Activated naive CD4-positive, alpha-beta T cell treated with anti-CD3 and anti-CD28 coated beads for 36 hours (primary cell): ENCODE measurements at regions of chr16 and their contacts with region 1.

Region 1: GRCh38 chr16:67546761-67547422 is 15.4 kb upstream of the CTCF start:
- DNase-seq: peak; percentile 81
- H3K4me3 Mint-ChIP-seq: peak overlapping the region; percentile 14
- H3K27ac Mint-ChIP-seq: peak overlapping the region; percentile 91
- H3K4me1 Mint-ChIP-seq: peaks cover 34% of the 10 kb centered on the region
- H3K27me3 Mint-ChIP-seq: no peaks in the 10 kb centered on the region

Region 2: GRCh38 chr16:66608241-66609138 is 938.4 kb before region 1 on chr16:
- CTCF ChIA-PET with region 1: no interaction called
- intact Hi-C with region 1: no loop called
- DNase-seq: peak; percentile 89
- H3K4me3 Mint-ChIP-seq: no peak overlapping the region
- H3K27ac Mint-ChIP-seq: no peak overlapping the region
- H3K4me1 Mint-ChIP-seq: peaks cover 33% of the 10 kb centered on the region
- H3K27me3 Mint-ChIP-seq: no peaks in the 10 kb centered on the region

Region 3: DNA sequence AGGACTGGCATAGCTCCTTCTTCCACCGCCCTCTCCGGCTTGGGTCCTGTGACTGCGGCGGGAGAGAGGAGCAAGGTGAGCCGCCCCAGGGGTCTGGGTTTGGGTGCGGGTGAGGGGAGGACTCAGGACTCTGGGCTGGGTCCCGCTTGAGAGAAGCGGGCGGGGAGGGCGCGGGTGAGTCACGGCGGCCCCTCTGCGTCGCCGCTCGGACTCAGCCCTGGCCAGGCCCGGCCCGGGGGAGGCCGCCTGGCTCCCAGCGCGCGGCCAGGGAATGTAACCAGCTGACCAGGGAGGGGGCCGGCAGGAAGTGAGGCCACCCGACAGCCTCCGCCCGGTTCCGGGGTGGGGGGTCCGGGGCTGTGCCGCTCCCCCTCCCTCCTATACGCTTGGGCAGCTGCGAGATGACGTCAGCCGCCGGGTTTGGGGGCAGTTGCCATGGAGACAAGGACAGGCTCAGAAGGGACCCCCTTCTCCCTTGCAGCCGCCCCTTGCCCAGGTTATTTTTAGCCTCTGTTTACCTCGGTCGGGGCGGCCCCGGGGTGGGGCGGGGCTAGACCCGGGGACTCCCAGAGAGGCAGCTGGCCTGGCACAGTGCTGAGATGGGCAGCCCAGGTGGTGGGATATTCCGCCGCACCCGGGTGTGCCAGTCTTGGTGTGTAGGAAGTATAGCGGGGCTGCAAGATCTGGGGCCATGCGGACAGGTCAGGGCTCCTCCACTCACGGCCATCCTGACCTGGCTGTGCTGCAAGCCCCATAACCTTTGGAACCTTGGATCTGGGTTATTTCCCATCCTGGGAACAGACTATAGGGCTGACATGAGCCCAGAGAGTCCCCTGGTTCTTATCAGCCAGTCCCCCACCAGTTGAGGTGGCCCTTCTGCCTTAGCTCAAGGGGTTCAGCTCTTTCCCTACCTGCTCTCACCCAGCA is 16.6 kb before region 1 on chr16:
- CTCF ChIA-PET with region 1: interaction called, 29 read pairs
- intact Hi-C with region 1: no loop called
- DNase-seq: peak; percentile 54
- H3K4me3 Mint-ChIP-seq: peak overlapping the region; percentile 68
- H3K27ac Mint-ChIP-seq: no peak overlapping the region
- H3K4me1 Mint-ChIP-seq: peaks cover 14% of the 10 kb centered on the region
- H3K27me3 Mint-ChIP-seq: peaks cover 20% of the 10 kb centered on the region

Region 4: DNA sequence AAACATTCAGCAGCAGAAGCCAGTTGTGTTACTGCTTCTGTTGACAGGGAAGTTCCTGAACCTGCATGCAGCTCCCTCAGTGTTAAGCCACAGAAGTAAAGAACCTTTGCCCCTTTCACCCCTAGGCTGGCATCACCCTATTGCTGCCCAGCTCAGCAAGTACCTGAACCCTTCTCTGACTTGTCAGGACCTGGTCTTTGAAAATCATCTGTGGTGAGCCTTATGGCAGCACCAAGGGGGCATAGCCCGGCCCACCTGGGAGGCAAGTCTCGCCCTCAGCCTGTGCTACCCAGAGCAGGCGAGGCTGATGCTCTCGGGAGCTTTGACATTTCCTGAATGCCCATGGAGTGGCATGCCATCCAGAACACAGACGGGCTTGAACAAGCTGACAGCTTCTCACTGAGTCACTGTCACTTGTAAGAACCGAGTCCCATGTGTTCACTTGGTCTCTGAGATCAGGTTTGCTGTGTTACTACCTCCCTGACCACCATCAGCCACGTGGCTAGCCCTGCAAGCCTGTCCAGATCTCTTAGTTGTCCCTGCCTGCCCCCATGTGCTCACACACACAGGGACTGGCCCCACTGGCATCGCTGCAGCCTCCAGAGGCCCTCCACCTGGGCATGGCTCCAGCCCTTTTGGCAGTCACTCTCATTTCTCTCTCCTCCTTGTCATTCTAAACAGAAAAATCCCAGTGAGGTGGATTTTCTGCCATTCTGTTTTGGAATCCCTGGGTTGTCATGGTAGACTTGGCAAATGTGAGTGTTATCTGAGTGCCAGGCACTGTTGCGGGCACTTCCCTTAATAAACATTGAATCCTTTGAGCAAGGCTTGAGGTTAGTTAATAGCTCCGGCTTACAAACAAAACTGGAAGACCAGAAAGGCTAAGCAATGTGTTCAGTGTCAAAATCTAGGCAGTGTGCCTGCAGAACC is 95.2 kb after region 1 on chr16:
- CTCF ChIA-PET with region 1: interaction called, 168 read pairs
- intact Hi-C with region 1: loop called (anchors 1 kb)
- DNase-seq: no peak
- H3K4me3 Mint-ChIP-seq: no peak overlapping the region
- H3K27ac Mint-ChIP-seq: no peak overlapping the region
- H3K4me1 Mint-ChIP-seq: peaks cover 9% of the 10 kb centered on the region
- H3K27me3 Mint-ChIP-seq: no peaks in the 10 kb centered on the region

Region 5: GRCh38 chr16:67660564-67661028 is 113.7 kb after region 1 on chr16 and contains the start of gene PARD6A:
- CTCF ChIA-PET with region 1: interaction called, 34 read pairs
- intact Hi-C with region 1: no loop called
- DNase-seq: peak; percentile 97
- H3K4me3 Mint-ChIP-seq: peak within 1 kb of the TSS; percentile 90
- H3K27ac Mint-ChIP-seq: peak within 1 kb of the TSS; percentile 92
- H3K4me1 Mint-ChIP-seq: peaks cover 21% of the 10 kb centered on the region
- H3K27me3 Mint-ChIP-seq: no peaks in the 10 kb centered on the region
- total RNA-seq, gene PARD6A: 7.3 to 8.4 TPM

Region 6: GRCh38 chr16:67833418-67834241 is 286.7 kb after region 1 on chr16:
- CTCF ChIA-PET with region 1: no interaction called
- intact Hi-C with region 1: no loop called
- DNase-seq: peak; percentile 98
- H3K4me3 Mint-ChIP-seq: peak overlapping the region; percentile 86
- H3K27ac Mint-ChIP-seq: no peak overlapping the region
- H3K4me1 Mint-ChIP-seq: peaks cover 6% of the 10 kb centered on the region
- H3K27me3 Mint-ChIP-seq: no peaks in the 10 kb centered on the region